A549 (cell line): ENCODE measurements at regions of chr6 and their contacts with region 1.

Region 1: GRCh38 chr6:32933636-32934085 is 7.2 kb downstream of the HLA-DMB start:
- DNase-seq: peak; percentile 61 to 65
- ATAC-seq: peak; percentile 66 to 78; a peak in 4 of 6 replicates
- H3K4me3 ChIP-seq: no peak overlapping the region
- H3K27ac ChIP-seq: no peak overlapping the region
- H3K4me1 ChIP-seq: no peaks in the 10 kb centered on the region
- CTCF ChIP-seq: peak; percentile 73
- EP300 ChIP-seq: no peak
- POLR2A ChIP-seq: no peak
- RAD21 ChIP-seq: peak; percentile 49 to 58; a peak in 4 of 5 replicates

Region 2: DNA sequence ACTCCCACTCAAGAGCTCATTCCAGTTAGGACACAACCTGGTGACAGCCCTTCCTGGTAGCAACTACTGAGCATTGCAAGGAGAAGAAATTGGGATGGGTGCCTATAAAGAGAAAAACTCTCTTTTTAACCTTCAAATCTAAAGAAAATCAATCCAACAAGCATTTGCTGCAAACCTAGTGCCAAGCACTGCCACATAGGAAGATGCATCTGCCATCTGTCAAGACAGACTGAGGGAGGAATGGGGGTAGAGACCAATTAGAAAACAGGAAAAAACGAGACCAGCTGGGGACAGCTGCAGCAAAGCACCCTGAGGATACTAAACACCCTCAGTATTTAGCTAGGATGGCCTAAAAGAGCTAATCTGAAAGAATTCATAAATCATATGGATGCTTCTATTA is 20.7 kb before region 1 on chr6:
- CTCF ChIA-PET with region 1: interaction called, 10 read pairs
- POLR2A ChIA-PET with region 1: no interaction called
- DNase-seq: no peak
- ATAC-seq: no peak
- H3K4me3 ChIP-seq: no peak overlapping the region
- H3K27ac ChIP-seq: no peak overlapping the region
- H3K4me1 ChIP-seq: peaks cover 21% of the 10 kb centered on the region
- CTCF ChIP-seq: no peak
- EP300 ChIP-seq: no peak
- POLR2A ChIP-seq: no peak
- RAD21 ChIP-seq: no peak

Region 3: GRCh38 chr6:32947552-32948465 is 14.1 kb after region 1 on chr6:
- CTCF ChIA-PET with region 1: interaction called, 32 read pairs
- POLR2A ChIA-PET with region 1: no interaction called
- DNase-seq: peak in 1 of 2 experiments; percentile 75
- ATAC-seq: peak; percentile 92 to 95
- H3K4me3 ChIP-seq: no peak overlapping the region
- H3K27ac ChIP-seq: no peak overlapping the region
- H3K4me1 ChIP-seq: peaks cover 4% of the 10 kb centered on the region; the same call in 1 of the 3 replicates
- CTCF ChIP-seq: peak; percentile 78
- EP300 ChIP-seq: no peak
- POLR2A ChIP-seq: no peak
- RAD21 ChIP-seq: peak; percentile 91 to 94